Sciatic nerve (tissue), 2 donors: ENCODE measurements at regions of chr14 and their contacts with region 1.

Region 1: GRCh38 chr14:103085106-103086091 is 1.4 kb downstream of the LBHD2 start:
- DNase-seq: no peak
- ATAC-seq: no peak

Region 2: GRCh38 chr14:103058097-103059055 is 27.0 kb before region 1 on chr14:
- intact Hi-C with region 1: no loop called
- DNase-seq: peak; percentile 61
- ATAC-seq: peak; percentile 25

Region 3: GRCh38 chr14:103292426-103293374 is 207.3 kb after region 1 on chr14:
- intact Hi-C with region 1: loop called (anchors 5 kb)
- DNase-seq: peak; percentile 90
- ATAC-seq: peak; percentile 95

Region 4: DNA sequence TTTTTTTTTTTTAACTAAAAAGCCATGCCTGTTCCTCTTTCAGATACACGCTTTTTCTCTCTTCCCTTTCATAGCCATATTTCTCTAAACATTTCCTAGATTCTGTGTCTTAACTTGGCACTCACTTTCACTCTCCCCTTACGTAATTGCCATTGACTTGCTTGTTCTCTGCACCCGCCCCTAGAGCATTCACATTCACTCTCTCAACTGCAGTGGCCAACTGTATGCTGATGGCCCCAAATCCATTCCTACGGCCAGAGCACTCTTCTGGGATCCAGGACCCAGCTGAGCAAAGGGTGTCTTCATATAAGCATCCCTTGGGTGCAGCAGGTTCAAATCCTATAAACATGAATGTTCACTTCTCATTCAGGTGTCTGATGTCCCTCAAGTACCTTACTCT is 377.8 kb after region 1 on chr14:
- intact Hi-C with region 1: no loop called
- DNase-seq: no peak
- ATAC-seq: no peak

Region 5: DNA sequence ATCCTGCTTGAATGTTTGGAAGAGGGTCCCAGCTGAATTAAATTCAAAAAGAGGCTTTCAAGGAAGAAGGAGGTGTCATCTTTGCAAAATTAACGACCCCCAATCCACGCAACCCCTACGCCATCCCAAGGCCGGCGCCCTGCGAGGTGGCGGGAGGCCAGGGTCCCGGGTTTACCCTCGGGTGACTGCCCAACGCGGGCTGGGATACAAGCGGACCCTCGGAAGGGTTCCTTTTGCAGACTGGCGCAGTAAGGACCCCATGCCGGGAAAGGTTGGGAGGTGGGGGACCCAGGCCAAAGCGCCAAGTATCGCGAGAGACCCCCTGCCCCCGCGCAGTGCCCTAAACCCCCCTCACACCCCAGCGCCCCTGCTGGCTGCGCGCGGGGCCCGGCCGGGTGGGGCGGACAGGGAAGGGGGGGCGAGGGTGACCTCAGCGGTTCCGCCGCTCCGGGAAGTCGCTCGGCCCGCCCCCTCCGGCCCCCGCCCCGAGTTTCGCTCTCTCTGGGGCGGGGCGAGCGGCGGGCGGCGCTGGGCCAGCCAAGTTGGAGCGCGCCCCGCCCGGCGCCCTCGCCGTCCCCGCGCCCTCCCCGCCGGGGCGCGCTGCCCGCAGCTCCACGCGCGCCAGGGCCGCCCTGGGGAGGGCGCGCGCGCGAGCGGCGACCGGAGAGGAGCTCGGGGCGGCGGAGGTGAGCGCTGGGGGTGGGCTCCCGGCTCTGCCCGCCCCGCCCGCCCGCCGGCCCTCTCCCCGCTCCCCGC is 1714.8 kb after region 1 on chr14:
- intact Hi-C with region 1: no loop called
- DNase-seq: peak; percentile 93
- ATAC-seq: peak; percentile 86